ENCODE measurements at regions of chr1 and their contacts with region 1.

Region 1: GRCh38 chr1:66271216-66271903 is 262.6 kb upstream of the SGIP1 start:
- DNase-seq: peak; percentile 84
- H3K4me3 Mint-ChIP-seq: peak overlapping the region; percentile 54
- H3K27ac Mint-ChIP-seq: peak overlapping the region; percentile 90
- H3K4me1 Mint-ChIP-seq: peaks cover 74% of the 10 kb centered on the region
- H3K27me3 Mint-ChIP-seq: no peaks in the 10 kb centered on the region

Region 2: GRCh38 chr1:66223681-66224080 is 47.7 kb before region 1 on chr1:
- CTCF ChIA-PET with region 1: no interaction called
- intact Hi-C with region 1: no loop called
- DNase-seq: peak; percentile 49
- H3K4me3 Mint-ChIP-seq: no peak overlapping the region
- H3K27ac Mint-ChIP-seq: peak overlapping the region; percentile 1
- H3K4me1 Mint-ChIP-seq: peaks cover 8% of the 10 kb centered on the region
- H3K27me3 Mint-ChIP-seq: peaks cover 3% of the 10 kb centered on the region

Region 3: GRCh38 chr1:66258404-66259105 is 12.8 kb before region 1 on chr1:
- CTCF ChIA-PET with region 1: interaction called, 7 read pairs
- intact Hi-C with region 1: loop called (anchors 1 kb)
- DNase-seq: peak; percentile 43
- H3K4me3 Mint-ChIP-seq: no peak overlapping the region
- H3K27ac Mint-ChIP-seq: peak overlapping the region; percentile 3
- H3K4me1 Mint-ChIP-seq: peaks cover 84% of the 10 kb centered on the region
- H3K27me3 Mint-ChIP-seq: no peaks in the 10 kb centered on the region

Region 4: DNA sequence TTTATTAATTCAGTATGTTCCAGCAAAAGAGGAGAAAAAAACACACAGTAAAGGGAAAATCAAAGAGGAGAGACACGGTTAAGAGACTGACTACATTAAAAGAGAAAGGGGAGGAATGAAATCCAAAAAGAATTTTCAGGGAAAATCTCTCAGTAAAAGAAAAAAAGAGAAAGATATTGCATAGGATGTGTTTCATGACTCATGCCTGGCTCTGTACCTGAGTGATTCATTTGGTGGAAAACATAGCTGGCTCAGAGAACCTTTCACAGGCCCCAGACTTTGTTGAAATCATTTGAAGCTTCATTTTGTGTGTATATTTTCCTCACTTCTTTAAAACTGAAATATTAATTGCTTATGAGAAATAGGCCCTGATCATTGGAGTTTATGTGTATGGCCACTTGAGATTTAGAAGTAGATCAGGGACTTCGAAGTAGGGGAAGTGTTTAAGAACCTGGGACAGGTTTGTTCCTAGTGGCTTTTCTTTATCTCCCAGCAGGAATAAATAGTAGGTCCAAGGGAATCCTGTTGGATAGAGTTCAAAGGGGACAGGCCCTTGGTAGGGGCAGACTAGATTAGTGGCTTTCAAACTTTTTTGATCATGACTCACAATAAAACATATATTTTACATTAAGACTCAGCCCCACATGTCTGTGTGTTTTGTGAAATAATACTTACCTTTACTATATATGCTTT is 23.5 kb after region 1 on chr1:
- CTCF ChIA-PET with region 1: interaction called, 4 read pairs
- intact Hi-C with region 1: loop called (anchors 1 kb)
- DNase-seq: peak; percentile 44
- H3K4me3 Mint-ChIP-seq: no peak overlapping the region
- H3K27ac Mint-ChIP-seq: peak overlapping the region; percentile 46
- H3K4me1 Mint-ChIP-seq: peaks cover 43% of the 10 kb centered on the region
- H3K27me3 Mint-ChIP-seq: no peaks in the 10 kb centered on the region

Region 5: DNA sequence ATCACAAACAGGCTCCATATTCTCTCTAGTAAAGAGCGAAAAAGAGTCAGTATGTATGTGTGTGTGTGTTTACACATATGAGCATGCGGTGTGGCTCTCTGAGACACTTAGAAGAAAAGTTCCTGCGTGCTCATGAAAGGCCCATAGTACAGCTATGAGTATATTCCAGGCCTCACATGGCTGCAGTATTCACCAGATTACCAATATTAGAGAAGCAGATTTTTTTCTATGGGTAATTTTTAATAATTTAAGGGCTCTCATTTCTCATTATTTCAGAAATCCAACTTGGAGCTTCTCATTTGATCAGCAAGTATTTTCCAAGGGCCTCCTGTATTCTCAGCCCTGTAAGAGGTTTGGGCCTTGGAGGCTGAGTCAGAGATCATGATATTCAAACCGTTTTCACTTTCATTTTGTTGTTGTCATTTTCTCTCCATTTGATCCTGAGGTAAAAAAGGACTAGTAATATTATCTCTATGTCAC is 29.7 kb after region 1 on chr1:
- CTCF ChIA-PET with region 1: interaction called, 4 read pairs
- intact Hi-C with region 1: loop called (anchors 1 kb)
- DNase-seq: peak; percentile 54
- H3K4me3 Mint-ChIP-seq: peak overlapping the region; percentile 40
- H3K27ac Mint-ChIP-seq: peak overlapping the region; percentile 69
- H3K4me1 Mint-ChIP-seq: peaks cover 38% of the 10 kb centered on the region
- H3K27me3 Mint-ChIP-seq: no peaks in the 10 kb centered on the region

Region 6: GRCh38 chr1:66413136-66413837 is 141.9 kb after region 1 on chr1:
- CTCF ChIA-PET with region 1: no interaction called
- intact Hi-C with region 1: no loop called
- DNase-seq: no peak
- H3K4me3 Mint-ChIP-seq: no peak overlapping the region
- H3K27ac Mint-ChIP-seq: no peak overlapping the region
- H3K4me1 Mint-ChIP-seq: peaks cover 10% of the 10 kb centered on the region
- H3K27me3 Mint-ChIP-seq: no peaks in the 10 kb centered on the region

Measured in activated naive CD4-positive, alpha-beta T cell treated with anti-CD3 and anti-CD28 coated beads for 36 hours (primary cell).